ENCODE measurements at regions of chr5 and their contacts with region 1.

Region 1: GRCh38 chr5:109921735-109922380 is 232.1 kb downstream of the MAN2A1 start:
- DNase-seq: peak; percentile 13 to 90 (median 84)
- ATAC-seq: peak; percentile 92
- H3K4me3 ChIP-seq: peak overlapping the region; percentile 1
- H3K4me3 Mint-ChIP-seq: peak overlapping the region; percentile 75 to 91 (median 82)
- H3K27ac ChIP-seq: peak overlapping the region; percentile 78
- H3K27ac Mint-ChIP-seq: peak overlapping the region; percentile 89 to 100 (median 97)
- H3K4me1 ChIP-seq: peaks cover 34 to 45% of the 10 kb centered on the region in 2 donors
- H3K4me1 Mint-ChIP-seq: peaks cover 17 to 76% (median 62%) of the 10 kb centered on the region in 7 donors
- H3K27me3 ChIP-seq: no peaks in the 10 kb centered on the region
- H3K27me3 Mint-ChIP-seq: no peaks in the 10 kb centered on the region

Region 2: DNA sequence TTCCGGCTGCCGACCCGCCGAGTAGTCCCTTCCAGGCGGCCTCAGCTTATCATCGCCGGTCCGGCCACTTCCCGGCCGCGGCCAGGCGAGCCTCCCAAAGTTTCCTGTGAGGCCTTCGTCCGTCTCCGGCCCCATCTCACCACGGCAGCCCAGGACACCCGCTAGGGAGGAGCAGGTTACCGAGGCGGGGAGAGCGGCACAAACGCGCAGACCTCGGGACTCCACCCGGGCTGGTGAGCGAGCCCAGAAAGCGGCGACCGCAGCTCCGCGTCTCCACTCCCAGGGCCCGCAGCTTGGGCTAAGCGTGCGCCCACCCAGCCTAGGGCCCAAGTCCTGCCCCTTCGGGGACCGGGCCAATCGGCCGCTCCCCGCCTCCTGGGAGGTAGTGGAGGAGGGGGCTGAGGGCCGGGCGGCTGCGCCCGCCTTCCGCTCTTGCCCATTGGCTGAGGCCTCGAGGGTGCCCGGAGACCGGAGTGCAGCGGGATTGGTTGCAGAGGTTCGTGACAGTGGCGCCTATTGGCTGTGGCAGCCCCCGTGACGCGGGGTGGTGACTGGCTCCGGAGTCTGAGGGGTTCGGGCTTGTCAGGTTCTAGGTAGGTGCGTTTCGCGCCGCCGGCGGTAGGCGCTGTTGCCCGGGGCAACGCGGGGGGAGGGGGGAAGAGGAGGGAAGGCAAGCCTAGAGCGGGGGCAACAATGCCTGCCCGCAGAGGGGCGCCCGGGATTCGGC is 1173.3 kb before region 1 on chr5:
- CTCF ChIA-PET with region 1: no interaction called
- POLR2A ChIA-PET with region 1: no interaction called
- intact Hi-C with region 1: loop called in 1 of 2 experiments (anchors 2 kb)
- DNase-seq: peak; percentile 92 to 99 (median 98)
- ATAC-seq: peak; percentile 94
- H3K4me3 ChIP-seq: peak overlapping the region; percentile 91
- H3K4me3 Mint-ChIP-seq: peak overlapping the region; percentile 83 to 100 (median 93)
- H3K27ac ChIP-seq: peak overlapping the region; percentile 94
- H3K27ac Mint-ChIP-seq: peak overlapping the region; percentile 78 to 98 (median 93)
- H3K4me1 ChIP-seq: peaks cover 10 to 12% of the 10 kb centered on the region in 2 donors
- H3K4me1 Mint-ChIP-seq: peaks cover 9 to 26% (median 13%) of the 10 kb centered on the region in 7 donors
- H3K27me3 ChIP-seq: no peaks in the 10 kb centered on the region
- H3K27me3 Mint-ChIP-seq: peaks cover 0 to 52% (median 0%) of the 10 kb centered on the region in 5 donors

Region 3: DNA sequence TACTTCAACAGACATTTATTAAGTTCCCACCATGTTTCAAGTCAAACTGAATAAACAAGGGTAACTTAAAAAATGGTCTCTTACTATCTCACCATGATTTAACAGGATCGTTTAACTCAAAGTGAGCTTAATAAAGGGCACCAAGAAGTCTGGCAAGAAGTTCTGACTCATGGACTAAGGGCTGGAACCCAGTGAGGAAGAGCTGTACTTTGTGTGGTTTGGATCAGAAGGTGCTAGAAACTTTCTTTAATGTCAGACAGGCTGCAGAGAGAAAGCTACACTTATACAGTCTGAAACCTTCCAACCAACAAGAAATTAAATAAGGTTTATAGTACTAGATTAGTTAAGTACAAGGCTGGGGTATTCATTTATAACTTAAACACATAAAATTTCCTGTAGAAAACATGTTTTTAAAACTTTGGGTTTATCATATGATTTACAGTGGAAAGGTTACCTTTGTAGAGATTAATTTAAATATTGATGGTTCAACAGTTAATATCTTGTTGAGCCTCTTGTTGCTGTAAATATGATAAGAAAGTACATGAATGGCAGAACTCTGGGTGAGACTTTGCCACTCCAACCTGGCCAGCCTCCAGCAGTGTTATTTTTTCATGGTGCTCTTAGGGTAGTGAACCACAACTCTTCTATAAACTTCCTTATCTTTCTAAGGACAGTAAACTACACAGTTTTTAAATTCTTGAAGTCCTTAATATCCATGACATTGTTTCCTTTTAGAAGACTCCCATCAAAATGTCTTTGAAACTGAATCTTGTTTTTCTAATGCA is 69.3 kb before region 1 on chr5:
- CTCF ChIA-PET with region 1: interaction called, 4 read pairs
- POLR2A ChIA-PET with region 1: interaction called, 21 read pairs
- intact Hi-C with region 1: loop called (anchors 1 kb)
- DNase-seq: no peak
- ATAC-seq: no peak
- H3K4me3 ChIP-seq: no peak overlapping the region
- H3K4me3 Mint-ChIP-seq: peak overlapping the region in 8 of 10 donors; percentile 9 to 75 (median 23)
- H3K27ac ChIP-seq: no peak overlapping the region
- H3K27ac Mint-ChIP-seq: peak overlapping the region in 8 of 9 donors; percentile 63 to 97 (median 84)
- H3K4me1 ChIP-seq: peaks cover 61 to 71% of the 10 kb centered on the region in 2 donors
- H3K4me1 Mint-ChIP-seq: peaks cover 47 to 99% (median 91%) of the 10 kb centered on the region in 7 donors
- H3K27me3 ChIP-seq: no peaks in the 10 kb centered on the region
- H3K27me3 Mint-ChIP-seq: no peaks in the 10 kb centered on the region

Region 4: GRCh38 chr5:109936996-109937395 is 15.1 kb after region 1 on chr5:
- CTCF ChIA-PET with region 1: interaction called, 3 read pairs
- POLR2A ChIA-PET with region 1: interaction called, 4 read pairs
- intact Hi-C with region 1: loop called in 1 of 2 experiments (anchors 2 kb)
- DNase-seq: peak in 1 of 9 donors; percentile 24
- ATAC-seq: no peak
- H3K4me3 ChIP-seq: no peak overlapping the region
- H3K4me3 Mint-ChIP-seq: peak overlapping the region in 4 of 10 donors; percentile 20 to 53 (median 34)
- H3K27ac ChIP-seq: no peak overlapping the region
- H3K27ac Mint-ChIP-seq: peak overlapping the region in 2 of 9 donors; percentile 30 to 65
- H3K4me1 ChIP-seq: no peaks in the 10 kb centered on the region
- H3K4me1 Mint-ChIP-seq: peaks cover 6 to 25% (median 18%) of the 10 kb centered on the region in 7 donors
- H3K27me3 ChIP-seq: no peaks in the 10 kb centered on the region
- H3K27me3 Mint-ChIP-seq: peaks cover 0 to 3% (median 0%) of the 10 kb centered on the region in 5 donors

Region 5: GRCh38 chr5:110031402-110032140 is 109.7 kb after region 1 on chr5:
- CTCF ChIA-PET with region 1: no interaction called
- POLR2A ChIA-PET with region 1: no interaction called
- intact Hi-C with region 1: loop called in 1 of 2 experiments (anchors 5 kb)
- DNase-seq: peak in 7 of 9 donors; percentile 10 to 49 (median 23)
- ATAC-seq: peak; percentile 31
- H3K4me3 ChIP-seq: no peak overlapping the region
- H3K4me3 Mint-ChIP-seq: peak overlapping the region in 2 of 10 donors; percentile 8 to 20
- H3K27ac ChIP-seq: no peak overlapping the region
- H3K27ac Mint-ChIP-seq: peak overlapping the region in 3 of 9 donors; percentile 21 to 78 (median 33)
- H3K4me1 ChIP-seq: peaks cover 8 to 11% of the 10 kb centered on the region in 2 donors
- H3K4me1 Mint-ChIP-seq: peaks cover 5 to 54% (median 37%) of the 10 kb centered on the region in 7 donors
- H3K27me3 ChIP-seq: no peaks in the 10 kb centered on the region
- H3K27me3 Mint-ChIP-seq: no peaks in the 10 kb centered on the region

Region 6: GRCh38 chr5:110625376-110625999 is 703.6 kb after region 1 on chr5:
- CTCF ChIA-PET with region 1: no interaction called
- POLR2A ChIA-PET with region 1: no interaction called
- intact Hi-C with region 1: loop called in 1 of 2 experiments (anchors 5 kb)
- DNase-seq: peak in 4 of 9 donors; percentile 18 to 41 (median 36)
- ATAC-seq: no peak
- H3K4me3 ChIP-seq: no peak overlapping the region
- H3K4me3 Mint-ChIP-seq: no peak overlapping the region
- H3K27ac ChIP-seq: no peak overlapping the region
- H3K27ac Mint-ChIP-seq: no peak overlapping the region
- H3K4me1 ChIP-seq: no peaks in the 10 kb centered on the region
- H3K4me1 Mint-ChIP-seq: no peaks in the 10 kb centered on the region
- H3K27me3 ChIP-seq: no peaks in the 10 kb centered on the region
- H3K27me3 Mint-ChIP-seq: peaks cover 0 to 11% (median 8%) of the 10 kb centered on the region in 5 donors